ENCODE measurements at regions of chr14 and their contacts with region 1.

Region 1: GRCh38 chr14:50532502-50533240 is at the start of gene MAP4K5:
- DNase-seq: peak; percentile 86 to 94
- H3K4me3 ChIP-seq: peak within 1 kb of the TSS; percentile 82
- H3K4me1 ChIP-seq: peaks cover 20% of the 10 kb centered on the region
- H3K27me3 ChIP-seq: no peaks in the 10 kb centered on the region

Region 2: DNA sequence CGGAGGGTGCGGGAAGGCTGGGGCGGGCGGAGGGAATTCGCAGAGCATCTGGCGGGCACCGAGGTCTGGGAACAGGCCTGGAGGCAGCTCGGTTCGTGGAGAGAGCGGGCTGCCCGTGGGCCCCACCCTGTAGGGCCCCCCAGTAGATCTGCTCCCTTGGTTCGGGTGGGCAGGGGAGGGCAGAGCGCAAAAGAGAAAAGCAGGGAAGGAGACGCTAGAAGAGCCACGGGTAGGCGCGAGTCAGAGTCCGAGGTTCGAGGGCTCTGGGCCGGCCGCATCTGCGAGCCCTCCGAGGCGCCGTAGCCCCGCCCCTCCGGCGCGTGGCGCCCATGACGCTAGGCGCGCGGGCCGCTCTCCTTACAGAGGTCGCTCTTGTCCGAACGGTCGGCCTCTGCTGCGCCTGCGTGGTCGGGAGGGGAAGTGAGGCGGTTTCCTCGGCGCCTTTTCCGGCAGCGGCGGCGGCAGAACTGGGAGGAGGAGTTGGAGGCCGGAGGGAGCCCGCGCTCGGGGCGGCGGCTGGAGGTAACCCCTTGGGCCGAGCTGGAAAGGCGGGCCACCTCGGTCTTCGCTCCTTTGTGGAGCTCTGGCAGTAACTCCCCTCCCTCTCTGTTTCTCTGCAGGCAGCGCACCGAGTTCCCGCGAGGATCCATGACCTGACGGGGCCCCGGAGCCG is 639.9 kb before region 1 on chr14 and contains the start of gene ARF6:
- in situ Hi-C with region 1: loop called (anchors 25 kb)
- DNase-seq: peak; percentile 95 to 98
- H3K4me3 ChIP-seq: peak within 1 kb of the TSS; percentile 70
- H3K4me1 ChIP-seq: peaks cover 17% of the 10 kb centered on the region
- H3K27me3 ChIP-seq: no peaks in the 10 kb centered on the region

Region 3: DNA sequence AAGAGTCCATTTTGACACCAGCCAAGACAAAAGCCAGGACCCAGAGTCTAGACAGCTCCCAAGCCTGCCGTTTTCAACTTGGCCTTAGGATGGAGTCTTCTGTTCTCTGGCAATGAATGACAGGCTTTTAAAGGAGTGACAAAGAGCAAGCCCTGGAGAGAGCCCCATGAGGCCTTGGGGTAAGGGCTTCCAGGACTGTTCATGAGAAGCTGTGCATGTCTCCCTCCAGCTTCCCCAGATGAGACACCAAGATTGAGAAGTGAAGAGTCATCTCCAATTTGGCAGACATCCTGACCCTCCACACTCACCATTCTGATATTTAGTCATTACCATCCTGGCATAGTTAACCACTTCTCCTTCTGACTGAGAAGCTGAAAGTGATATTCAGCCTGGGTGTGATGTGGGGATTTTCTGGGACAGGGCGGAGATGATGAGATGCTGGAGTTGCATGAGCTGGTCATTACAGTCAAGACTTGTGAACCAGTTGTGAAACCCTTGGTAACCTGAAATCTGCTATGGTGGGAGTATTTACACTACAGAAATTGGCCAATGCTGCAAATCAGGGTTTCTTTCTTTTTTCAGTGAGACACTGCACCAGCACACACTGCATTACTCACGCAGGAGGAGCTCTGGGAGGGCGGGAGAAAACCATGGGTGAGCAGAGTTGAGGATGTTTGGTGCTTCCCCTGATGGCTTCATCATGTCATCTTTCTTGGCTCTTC is 494.1 kb before region 1 on chr14:
- in situ Hi-C with region 1: no loop called
- DNase-seq: no peak
- H3K4me3 ChIP-seq: no peak overlapping the region
- H3K4me1 ChIP-seq: peaks cover 9% of the 10 kb centered on the region; the same call in 1 of the 2 replicates
- H3K27me3 ChIP-seq: no peaks in the 10 kb centered on the region

Region 4: DNA sequence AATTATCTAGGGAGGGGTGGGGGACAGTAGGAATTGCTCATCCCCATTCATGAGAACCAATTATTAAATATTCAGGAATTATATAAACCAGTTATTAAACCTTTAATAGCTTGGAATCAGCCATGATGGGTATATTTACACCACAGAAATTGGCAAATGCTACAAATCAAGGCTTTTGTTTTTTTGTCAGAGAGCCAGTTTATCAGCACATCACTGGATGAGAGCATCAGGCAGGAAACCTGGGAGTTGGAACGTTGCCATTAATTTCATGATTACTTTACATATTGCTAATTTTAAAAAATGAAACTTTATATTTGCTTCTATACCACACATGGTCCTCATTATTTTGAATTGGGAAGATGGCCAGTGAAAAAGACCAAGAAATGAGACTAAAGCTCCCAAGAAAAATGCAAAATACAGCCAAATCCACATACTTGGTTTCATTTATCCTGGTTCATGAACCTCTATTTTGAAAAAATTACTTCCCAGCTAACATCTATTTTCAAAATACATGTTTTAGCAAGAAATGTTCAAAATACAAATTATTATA is 75.7 kb after region 1 on chr14:
- in situ Hi-C with region 1: no loop called
- DNase-seq: no peak
- H3K4me3 ChIP-seq: no peak overlapping the region
- H3K4me1 ChIP-seq: no peaks in the 10 kb centered on the region
- H3K27me3 ChIP-seq: no peaks in the 10 kb centered on the region

Measured in HAP-1 (cell line).